ENCODE measurements at regions of chr11 and their contacts with region 1.

Region 1: DNA sequence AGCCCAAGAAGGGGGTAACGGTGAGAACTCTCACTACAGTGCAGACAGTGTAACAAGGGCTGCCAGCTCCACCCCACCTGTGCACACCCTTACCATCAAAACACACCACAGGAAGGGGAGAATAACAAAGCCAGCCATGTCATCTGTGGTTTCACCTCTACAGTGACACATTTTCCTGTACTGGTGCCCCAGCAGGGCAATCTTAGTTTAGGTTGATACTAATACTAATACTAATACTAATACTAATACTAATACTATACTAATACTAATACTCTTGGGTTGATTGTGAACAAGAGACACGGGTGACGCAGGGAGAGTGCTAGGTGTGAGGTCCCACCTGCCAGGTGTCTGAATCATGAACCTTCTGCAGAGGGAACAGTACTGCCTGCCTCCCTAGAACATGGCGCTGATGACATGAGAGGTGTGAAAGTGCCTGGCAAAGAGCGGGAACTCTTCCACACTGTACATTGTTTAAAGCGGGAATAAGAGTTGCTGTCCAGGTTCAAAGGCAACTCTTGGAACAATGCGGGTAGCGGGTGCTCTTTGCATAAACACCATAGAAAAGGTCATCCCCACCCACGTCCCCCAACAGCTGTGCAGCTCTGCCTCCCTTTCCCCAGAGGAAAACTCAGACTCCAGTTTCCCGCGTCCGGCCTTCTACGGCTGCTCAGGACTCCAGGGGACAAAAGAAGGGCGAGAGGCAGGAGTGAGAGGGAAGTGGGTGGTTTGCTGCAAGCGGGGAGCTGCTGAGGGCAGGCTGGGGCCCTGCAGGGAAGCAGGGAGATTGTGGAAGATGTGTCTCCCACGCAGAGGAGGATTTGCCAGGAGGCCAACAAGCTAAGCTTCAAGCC is 25.0 kb upstream of the TMPRSS4 start:
- DNase-seq: no peak
- H3K4me3 ChIP-seq: no peak overlapping the region
- H3K27ac ChIP-seq: no peak overlapping the region
- H3K4me1 ChIP-seq: no peaks in the 10 kb centered on the region
- H3K27me3 ChIP-seq: no peaks in the 10 kb centered on the region
- CTCF ChIP-seq: no peak
- POLR2A ChIP-seq: no peak

Region 2: DNA sequence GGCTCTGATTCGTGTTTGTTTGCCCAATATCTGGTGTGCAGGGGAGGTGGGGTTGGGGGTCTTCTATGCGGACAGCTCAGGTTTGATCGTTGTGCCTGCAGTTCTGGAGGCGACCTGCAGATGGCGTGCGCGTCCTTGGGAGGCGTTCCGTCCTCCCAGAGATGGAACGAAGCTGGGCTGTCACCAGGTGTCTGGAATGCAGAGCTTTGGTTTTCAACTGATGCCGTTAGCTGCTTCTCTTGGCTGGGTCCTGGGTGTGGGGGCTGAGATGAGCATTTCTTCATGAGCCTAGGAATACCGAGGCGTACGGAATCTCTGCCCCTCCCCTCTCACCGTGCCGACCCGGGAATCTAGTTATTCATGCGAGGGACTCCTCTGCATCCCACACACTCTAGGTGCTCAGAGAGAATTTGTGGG is 625.6 kb before region 1 on chr11:
- intact Hi-C with region 1: loop called (anchors 5 kb)
- DNase-seq: peak; percentile 69 to 78
- H3K4me3 ChIP-seq: no peak overlapping the region
- H3K27ac ChIP-seq: no peak overlapping the region
- H3K4me1 ChIP-seq: peaks cover 15 to 35% of the 10 kb centered on the region in 2 donors
- H3K27me3 ChIP-seq: no peaks in the 10 kb centered on the region
- CTCF ChIP-seq: peak; percentile 91 to 99 (median 94)
- POLR2A ChIP-seq: no peak

Region 3: DNA sequence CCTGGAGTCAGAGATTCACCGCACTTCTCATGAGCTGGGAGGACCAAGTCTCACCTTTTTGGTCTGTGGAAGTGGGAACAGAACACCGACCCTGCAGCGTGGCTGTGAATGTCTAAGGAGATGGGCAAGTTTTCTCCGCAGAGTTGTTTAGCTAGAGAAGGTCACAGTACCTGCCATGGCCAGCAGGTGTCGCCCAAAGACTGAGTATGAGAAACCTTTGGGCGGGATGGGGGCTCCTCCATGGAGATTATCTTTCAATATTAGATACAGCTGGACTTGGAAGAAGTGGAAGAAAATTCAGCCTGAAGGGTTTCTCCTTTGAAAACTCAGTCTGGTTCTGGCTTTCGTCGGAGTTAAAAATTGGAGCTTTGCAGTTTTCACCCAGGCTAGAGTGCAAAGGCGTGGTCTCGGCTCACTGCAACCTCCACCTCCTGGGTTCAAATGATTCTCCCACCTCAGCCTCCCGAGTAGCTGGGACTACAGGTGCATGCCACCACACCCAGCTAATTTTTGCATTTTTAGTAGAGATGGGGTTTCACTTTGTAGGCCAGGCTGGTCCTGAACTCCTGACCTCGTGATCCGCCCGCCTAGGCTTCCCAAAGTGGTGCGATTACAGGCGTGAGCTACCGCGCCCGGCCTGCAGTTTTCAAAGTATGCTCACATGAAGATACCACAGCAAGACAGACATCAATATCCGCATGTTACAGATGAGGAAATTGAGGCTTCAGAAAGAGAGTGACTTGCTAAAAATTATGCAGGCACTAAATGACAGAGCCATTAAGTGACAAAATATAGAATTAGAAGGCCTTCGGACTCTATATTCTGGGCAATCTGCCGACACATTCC is 244.1 kb before region 1 on chr11:
- intact Hi-C with region 1: loop called (anchors 5 kb)
- DNase-seq: peak; percentile 82 to 83
- H3K4me3 ChIP-seq: no peak overlapping the region
- H3K27ac ChIP-seq: no peak overlapping the region
- H3K4me1 ChIP-seq: no peaks in the 10 kb centered on the region
- H3K27me3 ChIP-seq: no peaks in the 10 kb centered on the region
- CTCF ChIP-seq: peak; percentile 78 to 96 (median 86)
- POLR2A ChIP-seq: no peak

Region 4: GRCh38 chr11:117946842-117947526 is 104.9 kb before region 1 on chr11:
- intact Hi-C with region 1: loop called (anchors 5 kb)
- DNase-seq: peak; percentile 87 to 89
- H3K4me3 ChIP-seq: no peak overlapping the region
- H3K27ac ChIP-seq: no peak overlapping the region
- H3K4me1 ChIP-seq: peaks cover 12 to 18% of the 10 kb centered on the region in 2 donors
- H3K27me3 ChIP-seq: no peaks in the 10 kb centered on the region
- CTCF ChIP-seq: peak; percentile 92 to 98 (median 96)
- POLR2A ChIP-seq: no peak